Activated B cell treated with CpG ODN at 0.5 μM for 24 hours (primary cell): ENCODE measurements at regions of chr10 and their contacts with region 1.

Region 1: DNA sequence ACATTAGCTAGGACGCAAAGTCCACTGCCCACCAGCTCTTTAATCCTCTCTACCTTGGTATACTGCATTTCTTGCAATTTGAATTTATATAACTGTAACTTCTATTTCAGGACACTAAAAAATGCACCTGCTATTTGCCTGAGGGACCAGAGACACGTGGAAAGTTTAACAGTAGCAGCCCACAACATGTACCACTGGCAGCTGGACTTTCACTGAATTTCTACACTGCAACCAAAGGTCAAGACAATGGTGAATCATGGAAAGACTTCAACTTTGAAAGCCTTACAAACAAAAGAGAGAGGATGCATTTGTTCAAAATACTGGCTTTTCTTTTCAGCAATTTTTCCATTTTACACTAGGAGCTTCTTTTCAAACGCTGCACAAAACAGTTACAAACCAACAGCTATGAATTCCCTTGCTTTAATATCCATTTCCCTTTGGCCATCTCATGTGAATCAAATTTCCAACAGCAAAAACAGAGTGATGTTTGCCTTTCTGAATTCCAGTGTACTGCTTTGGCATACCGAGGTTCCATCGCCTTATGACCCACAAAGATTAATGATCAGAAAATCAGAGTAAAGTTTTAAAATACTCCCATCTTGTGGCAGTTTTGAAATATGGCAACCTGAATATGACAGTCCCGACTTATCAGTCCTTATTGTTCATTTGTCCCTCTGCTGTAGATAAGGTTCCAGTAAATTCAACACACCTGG is 29.9 kb upstream of the HNRNPH3 start:
- DNase-seq: no peak
- ATAC-seq: peak; percentile 62
- H3K4me3 Mint-ChIP-seq: no peak overlapping the region
- H3K27ac Mint-ChIP-seq: peak overlapping the region; percentile 90
- H3K4me1 Mint-ChIP-seq: peaks cover 31% of the 10 kb centered on the region
- H3K27me3 Mint-ChIP-seq: no peaks in the 10 kb centered on the region
- CTCF ChIP-seq: no peak

Region 2: GRCh38 chr10:67284589-67284988 is 1017.4 kb before region 1 on chr10:
- CTCF ChIA-PET with region 1: no interaction called
- POLR2A ChIA-PET with region 1: no interaction called
- intact Hi-C with region 1: no loop called
- DNase-seq: no peak
- ATAC-seq: no peak
- H3K4me3 Mint-ChIP-seq: no peak overlapping the region
- H3K27ac Mint-ChIP-seq: no peak overlapping the region
- H3K4me1 Mint-ChIP-seq: no peaks in the 10 kb centered on the region
- H3K27me3 Mint-ChIP-seq: no peaks in the 10 kb centered on the region
- CTCF ChIP-seq: no peak

Region 3: GRCh38 chr10:67666416-67667034 is 635.4 kb before region 1 on chr10:
- CTCF ChIA-PET with region 1: interaction called, 3 read pairs
- POLR2A ChIA-PET with region 1: no interaction called
- intact Hi-C with region 1: loop called (anchors 5 kb)
- DNase-seq: no peak
- ATAC-seq: no peak
- H3K4me3 Mint-ChIP-seq: no peak overlapping the region
- H3K27ac Mint-ChIP-seq: no peak overlapping the region
- H3K4me1 Mint-ChIP-seq: no peaks in the 10 kb centered on the region
- H3K27me3 Mint-ChIP-seq: peaks cover 3% of the 10 kb centered on the region
- CTCF ChIP-seq: no peak

Region 4: DNA sequence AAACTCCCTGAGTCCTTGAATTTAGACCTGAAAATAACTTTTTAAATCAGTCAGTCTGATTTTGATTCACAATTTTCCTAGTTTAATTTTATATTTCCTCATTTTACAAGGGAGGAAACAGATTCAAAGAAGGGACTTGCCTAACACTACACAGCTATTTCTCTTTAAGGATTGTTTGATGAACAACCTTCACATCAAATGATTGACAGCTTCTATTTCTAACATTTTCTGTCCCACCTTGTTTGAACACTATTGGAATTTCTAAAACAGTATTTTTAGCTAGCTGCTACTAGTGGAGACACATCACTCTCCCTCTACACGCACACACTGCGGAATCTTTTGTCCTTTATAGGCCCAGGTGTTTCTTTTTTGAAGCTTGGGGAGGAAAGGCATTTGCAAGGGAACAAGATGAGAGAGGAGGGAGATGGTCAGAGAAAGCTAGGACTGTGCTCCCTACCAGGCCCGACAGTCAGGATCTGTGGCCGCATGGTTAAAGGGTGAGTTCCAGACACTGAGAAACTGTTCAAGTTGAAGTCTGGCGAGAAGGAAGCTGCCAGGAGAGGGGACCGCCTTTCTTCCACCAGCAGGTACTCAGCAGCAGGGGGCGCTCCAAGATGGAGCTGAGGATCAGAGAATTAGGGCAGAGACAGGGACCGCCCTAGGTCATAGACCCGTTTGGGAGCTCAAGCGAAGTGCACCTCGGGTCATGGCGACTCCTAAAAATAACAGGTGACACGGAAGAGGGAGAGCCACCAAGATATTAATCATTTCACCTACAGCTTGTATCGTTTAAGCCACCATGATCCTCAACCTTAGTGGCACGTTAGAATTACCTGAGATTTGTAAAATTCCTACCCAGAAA is 513.7 kb before region 1 on chr10:
- CTCF ChIA-PET with region 1: interaction called, 52 read pairs
- POLR2A ChIA-PET with region 1: interaction called, 3 read pairs
- intact Hi-C with region 1: loop called (anchors 1 kb)
- DNase-seq: peak; percentile 58
- ATAC-seq: peak; percentile 80
- H3K4me3 Mint-ChIP-seq: peak overlapping the region; percentile 52
- H3K27ac Mint-ChIP-seq: no peak overlapping the region
- H3K4me1 Mint-ChIP-seq: peaks cover 23% of the 10 kb centered on the region
- H3K27me3 Mint-ChIP-seq: no peaks in the 10 kb centered on the region
- CTCF ChIP-seq: no peak

Region 5: GRCh38 chr10:68208424-68209042 is 93.4 kb before region 1 on chr10:
- CTCF ChIA-PET with region 1: interaction called, 164 read pairs
- POLR2A ChIA-PET with region 1: interaction called, 4 read pairs
- intact Hi-C with region 1: loop called (anchors 1 kb)
- DNase-seq: no peak
- ATAC-seq: no peak
- H3K4me3 Mint-ChIP-seq: no peak overlapping the region
- H3K27ac Mint-ChIP-seq: no peak overlapping the region
- H3K4me1 Mint-ChIP-seq: no peaks in the 10 kb centered on the region
- H3K27me3 Mint-ChIP-seq: peaks cover 9% of the 10 kb centered on the region
- CTCF ChIP-seq: no peak

Region 6: DNA sequence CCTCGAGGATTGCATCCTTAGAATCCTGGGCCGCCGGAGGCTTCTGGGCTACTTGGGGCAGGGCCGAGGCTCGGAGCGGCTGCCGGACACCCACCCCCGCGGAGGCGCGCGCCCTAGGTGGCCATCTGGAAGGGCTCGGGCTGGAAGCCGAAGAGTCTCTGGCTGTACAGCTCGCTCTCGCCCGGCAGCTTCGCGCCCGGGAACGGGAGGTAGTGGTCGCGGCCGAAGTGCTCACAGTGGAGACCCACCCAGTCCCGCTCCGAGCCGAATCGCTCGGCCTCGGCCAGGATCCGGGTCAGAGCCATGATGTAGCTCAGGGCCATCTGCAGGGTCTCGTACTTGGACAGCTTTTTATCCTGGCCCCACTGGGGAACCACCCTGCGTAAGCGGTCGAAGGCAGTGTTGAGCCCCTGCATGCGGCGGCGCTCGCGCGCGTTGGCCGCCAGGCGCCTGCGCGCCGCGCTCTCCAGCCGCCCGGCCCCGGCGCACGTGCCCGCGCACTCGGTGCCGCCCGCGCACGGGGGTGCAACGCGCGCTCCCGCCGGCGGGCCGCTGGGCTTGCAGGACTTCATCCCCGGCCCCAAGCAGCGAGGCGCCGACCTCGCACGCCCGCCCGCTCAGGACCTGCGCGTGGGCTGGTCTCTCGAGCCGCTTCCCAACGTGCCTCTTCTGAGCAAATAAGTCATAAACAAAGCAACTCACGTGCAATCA is 70.7 kb before region 1 on chr10:
- CTCF ChIA-PET with region 1: interaction called, 24 read pairs
- POLR2A ChIA-PET with region 1: no interaction called
- intact Hi-C with region 1: loop called (anchors 5 kb)
- DNase-seq: peak; percentile 46
- ATAC-seq: peak; percentile 85
- H3K4me3 Mint-ChIP-seq: peak overlapping the region; percentile 81
- H3K27ac Mint-ChIP-seq: no peak overlapping the region
- H3K4me1 Mint-ChIP-seq: peaks cover 8% of the 10 kb centered on the region
- H3K27me3 Mint-ChIP-seq: peaks cover 38% of the 10 kb centered on the region
- CTCF ChIP-seq: no peak